Left colon (tissue), 2 donors: ENCODE measurements at regions of chr4 and their contacts with region 1.

Region 1: GRCh38 chr4:150583287-150584110 is 1.5 kb downstream of the MAB21L2 start:
- DNase-seq: peak; percentile 32
- ATAC-seq: no peak

Region 2: GRCh38 chr4:150297861-150298474 is 285.5 kb before region 1 on chr4:
- intact Hi-C with region 1: loop called in 1 of 2 experiments (anchors 5 kb)
- DNase-seq: peak in 1 of 2 donors; percentile 54
- ATAC-seq: peak; percentile 59

Region 3: GRCh38 chr4:150632639-150633038 is 49.1 kb after region 1 on chr4:
- intact Hi-C with region 1: no loop called
- DNase-seq: no peak
- ATAC-seq: no peak